ENCODE measurements at regions of chrX and their contacts with region 1.

Region 1: GRCh38 chrX:15242899-15243555 is 26.9 kb downstream of the ASB9 start:
- DNase-seq: no peak
- ATAC-seq: no peak
- H3K4me3 Mint-ChIP-seq: no peak overlapping the region
- H3K27ac Mint-ChIP-seq: no peak overlapping the region
- H3K4me1 Mint-ChIP-seq: no peaks in the 10 kb centered on the region
- H3K27me3 Mint-ChIP-seq: no peaks in the 10 kb centered on the region
- CTCF ChIP-seq: no peak

Region 2: GRCh38 chrX:13515211-13515930 is 1727.7 kb before region 1 on chrX:
- CTCF ChIA-PET with region 1: no interaction called
- POLR2A ChIA-PET with region 1: no interaction called
- intact Hi-C with region 1: loop called (anchors 10 kb)
- DNase-seq: no peak
- ATAC-seq: no peak
- H3K4me3 Mint-ChIP-seq: no peak overlapping the region
- H3K27ac Mint-ChIP-seq: no peak overlapping the region
- H3K4me1 Mint-ChIP-seq: no peaks in the 10 kb centered on the region
- H3K27me3 Mint-ChIP-seq: no peaks in the 10 kb centered on the region
- CTCF ChIP-seq: no peak

Region 3: GRCh38 chrX:14095702-14096101 is 1147.3 kb before region 1 on chrX:
- CTCF ChIA-PET with region 1: interaction called, 5 read pairs
- POLR2A ChIA-PET with region 1: no interaction called
- intact Hi-C with region 1: loop called (anchors 1 kb)
- DNase-seq: peak; percentile 11
- ATAC-seq: peak; percentile 68
- H3K4me3 Mint-ChIP-seq: no peak overlapping the region
- H3K27ac Mint-ChIP-seq: no peak overlapping the region
- H3K4me1 Mint-ChIP-seq: no peaks in the 10 kb centered on the region
- H3K27me3 Mint-ChIP-seq: no peaks in the 10 kb centered on the region
- CTCF ChIP-seq: no peak

Region 4: GRCh38 chrX:15107367-15107988 is 135.5 kb before region 1 on chrX:
- CTCF ChIA-PET with region 1: interaction called, 3 read pairs
- POLR2A ChIA-PET with region 1: no interaction called
- intact Hi-C with region 1: loop called (anchors 1 kb)
- DNase-seq: no peak
- ATAC-seq: no peak
- H3K4me3 Mint-ChIP-seq: no peak overlapping the region
- H3K27ac Mint-ChIP-seq: no peak overlapping the region
- H3K4me1 Mint-ChIP-seq: no peaks in the 10 kb centered on the region
- H3K27me3 Mint-ChIP-seq: no peaks in the 10 kb centered on the region
- CTCF ChIP-seq: no peak

Region 5: GRCh38 chrX:15143050-15143824 is 99.8 kb before region 1 on chrX:
- CTCF ChIA-PET with region 1: interaction called, 7 read pairs
- POLR2A ChIA-PET with region 1: no interaction called
- intact Hi-C with region 1: loop called (anchors 2 kb)
- DNase-seq: no peak
- ATAC-seq: peak; percentile 60
- H3K4me3 Mint-ChIP-seq: no peak overlapping the region
- H3K27ac Mint-ChIP-seq: no peak overlapping the region
- H3K4me1 Mint-ChIP-seq: peaks cover 2% of the 10 kb centered on the region
- H3K27me3 Mint-ChIP-seq: no peaks in the 10 kb centered on the region
- CTCF ChIP-seq: no peak

Measured in activated B cell treated with CpG ODN at 0.5 μM for 24 hours (primary cell).